Activated CD4-positive, alpha-beta T cell treated with anti-CD3 and anti-CD28 coated beads for 36 hours (primary cell): ENCODE measurements at regions of chr14 and their contacts with region 1.

Region 1: GRCh38 chr14:61837336-61838229 is 75.4 kb downstream of the SNAPC1 start:
- DNase-seq: peak; percentile 87
- ATAC-seq: peak; percentile 95
- H3K4me3 Mint-ChIP-seq: no peak overlapping the region
- H3K27ac Mint-ChIP-seq: no peak overlapping the region
- H3K4me1 Mint-ChIP-seq: peaks cover 4% of the 10 kb centered on the region
- H3K27me3 Mint-ChIP-seq: no peaks in the 10 kb centered on the region

Region 2: DNA sequence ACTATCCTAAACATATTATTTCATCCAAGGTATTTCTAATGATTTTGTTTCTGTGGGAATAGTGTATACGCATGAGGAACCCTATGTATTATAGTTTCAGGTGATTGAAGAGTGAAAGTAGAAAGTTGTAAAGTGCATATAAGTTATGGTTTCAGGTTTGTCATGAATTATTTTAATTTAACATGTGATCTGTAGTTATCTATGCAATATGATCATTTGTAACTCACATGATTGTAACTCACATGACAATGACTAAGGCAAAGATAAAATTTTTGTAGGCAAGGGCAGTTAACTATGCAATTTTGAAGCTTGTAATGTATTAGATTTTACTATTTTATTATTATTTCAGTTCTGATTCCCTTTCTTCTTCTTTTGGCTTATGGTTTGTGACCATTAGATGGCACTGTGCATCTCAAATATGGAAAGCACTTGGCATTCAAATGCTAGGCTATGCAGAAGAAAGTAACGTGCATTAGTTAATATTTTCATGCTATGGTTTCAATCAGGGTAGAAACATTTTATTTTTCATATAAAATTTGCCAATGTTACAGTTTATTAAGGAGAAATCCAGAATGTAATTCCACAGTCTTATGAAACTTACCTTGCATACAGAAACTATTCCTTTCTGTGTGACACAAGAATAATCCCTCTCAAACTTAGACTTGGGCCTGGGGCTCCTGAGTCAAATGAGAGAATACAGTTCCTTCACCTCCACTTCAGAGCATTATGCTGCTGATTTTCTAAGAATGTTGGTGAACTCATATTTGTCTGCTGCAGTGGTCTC is 540.7 kb before region 1 on chr14:
- CTCF ChIA-PET with region 1: interaction called, 7 read pairs
- POLR2A ChIA-PET with region 1: no interaction called
- intact Hi-C with region 1: loop called (anchors 1 kb)
- DNase-seq: no peak
- ATAC-seq: peak; percentile 67
- H3K4me3 Mint-ChIP-seq: no peak overlapping the region
- H3K27ac Mint-ChIP-seq: peak overlapping the region; percentile 29
- H3K4me1 Mint-ChIP-seq: peaks cover 54% of the 10 kb centered on the region
- H3K27me3 Mint-ChIP-seq: no peaks in the 10 kb centered on the region

Region 3: DNA sequence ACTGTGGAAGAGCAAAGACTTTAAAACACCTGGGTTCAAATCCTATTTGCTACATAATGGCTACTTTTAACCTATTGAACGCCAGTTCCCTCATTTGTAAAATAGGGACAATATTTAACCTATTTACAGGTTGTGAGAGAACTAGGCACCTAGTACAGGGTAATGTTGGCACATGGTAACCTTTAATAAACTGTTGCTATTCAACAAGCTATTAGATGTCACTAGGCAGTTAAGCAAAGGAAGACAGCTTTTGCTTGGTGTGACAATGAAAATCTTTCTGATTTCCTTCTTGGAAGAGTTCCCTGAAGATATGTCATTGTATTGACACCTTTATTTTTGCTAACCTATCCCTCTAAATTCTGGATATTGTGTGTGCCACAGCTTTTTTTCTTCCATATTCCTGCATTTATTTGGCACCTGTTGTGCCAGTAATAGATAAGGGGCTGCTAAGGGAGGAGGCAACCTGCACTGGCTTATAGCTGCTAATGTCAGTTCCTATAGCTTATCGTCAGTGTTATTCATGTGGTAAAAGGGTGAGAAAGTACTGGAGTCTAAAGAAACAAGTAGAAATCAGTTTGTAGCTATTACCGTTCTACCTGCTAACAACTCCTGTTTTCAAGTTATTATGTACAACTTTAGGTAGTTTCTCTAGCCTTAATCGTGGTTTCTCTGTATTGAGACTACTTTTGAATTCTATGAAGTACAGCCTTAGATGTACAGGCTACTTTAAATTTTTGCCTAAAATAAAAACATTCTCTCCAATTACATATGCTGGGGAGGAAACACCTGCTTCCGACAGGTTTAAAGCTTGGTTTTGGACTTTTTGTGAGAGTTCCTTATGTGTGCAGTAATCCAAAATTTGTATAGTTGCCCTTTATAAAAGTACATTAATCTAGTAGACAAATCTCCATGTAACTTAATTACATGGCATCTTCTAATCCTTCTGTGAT is 118.0 kb before region 1 on chr14:
- CTCF ChIA-PET with region 1: interaction called, 14 read pairs
- POLR2A ChIA-PET with region 1: no interaction called
- intact Hi-C with region 1: no loop called
- DNase-seq: no peak
- ATAC-seq: peak; percentile 52
- H3K4me3 Mint-ChIP-seq: peak overlapping the region; percentile 41
- H3K27ac Mint-ChIP-seq: peak overlapping the region; percentile 81
- H3K4me1 Mint-ChIP-seq: peaks cover 83% of the 10 kb centered on the region
- H3K27me3 Mint-ChIP-seq: no peaks in the 10 kb centered on the region

Region 4: GRCh38 chr14:61780125-61780524 is 57.5 kb before region 1 on chr14:
- CTCF ChIA-PET with region 1: interaction called, 14 read pairs
- POLR2A ChIA-PET with region 1: no interaction called
- intact Hi-C with region 1: no loop called
- DNase-seq: peak; percentile 20
- ATAC-seq: peak; percentile 95
- H3K4me3 Mint-ChIP-seq: no peak overlapping the region
- H3K27ac Mint-ChIP-seq: peak overlapping the region; percentile 88
- H3K4me1 Mint-ChIP-seq: peaks cover 36% of the 10 kb centered on the region
- H3K27me3 Mint-ChIP-seq: no peaks in the 10 kb centered on the region

Region 5: DNA sequence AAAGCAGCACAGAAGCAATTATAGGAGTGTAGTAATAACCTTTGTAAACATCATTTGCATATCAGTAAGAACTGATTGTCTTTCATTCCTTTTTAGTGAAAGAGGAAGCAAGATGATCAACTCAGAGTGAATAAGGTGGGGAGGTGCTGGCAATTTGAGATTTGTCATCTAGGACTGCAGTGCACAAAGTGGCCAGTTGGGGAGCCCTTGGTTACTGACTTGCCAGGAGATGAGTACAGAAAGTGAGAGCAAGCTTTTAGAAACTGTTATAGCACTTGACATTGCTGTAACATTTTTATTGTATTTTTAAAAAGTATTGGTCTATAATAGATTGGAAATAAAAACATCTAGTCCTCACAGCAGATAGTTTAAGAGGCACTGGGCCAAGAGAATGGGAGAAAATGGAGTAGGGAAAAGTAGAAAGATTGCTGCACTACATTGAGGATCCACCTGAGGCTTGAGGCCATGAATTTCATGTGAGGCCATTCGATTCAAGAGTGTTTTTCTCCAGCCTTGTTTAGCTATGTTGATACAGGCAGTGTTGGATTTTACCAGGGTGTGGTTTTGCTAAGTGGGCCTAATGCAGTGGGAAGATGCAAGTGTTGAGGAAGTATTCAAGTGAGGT is 22.8 kb after region 1 on chr14:
- CTCF ChIA-PET with region 1: interaction called, 13 read pairs
- POLR2A ChIA-PET with region 1: no interaction called
- intact Hi-C with region 1: no loop called
- DNase-seq: peak; percentile 86
- ATAC-seq: peak; percentile 100
- H3K4me3 Mint-ChIP-seq: no peak overlapping the region
- H3K27ac Mint-ChIP-seq: no peak overlapping the region
- H3K4me1 Mint-ChIP-seq: peaks cover 5% of the 10 kb centered on the region
- H3K27me3 Mint-ChIP-seq: peaks cover 14% of the 10 kb centered on the region

Region 6: DNA sequence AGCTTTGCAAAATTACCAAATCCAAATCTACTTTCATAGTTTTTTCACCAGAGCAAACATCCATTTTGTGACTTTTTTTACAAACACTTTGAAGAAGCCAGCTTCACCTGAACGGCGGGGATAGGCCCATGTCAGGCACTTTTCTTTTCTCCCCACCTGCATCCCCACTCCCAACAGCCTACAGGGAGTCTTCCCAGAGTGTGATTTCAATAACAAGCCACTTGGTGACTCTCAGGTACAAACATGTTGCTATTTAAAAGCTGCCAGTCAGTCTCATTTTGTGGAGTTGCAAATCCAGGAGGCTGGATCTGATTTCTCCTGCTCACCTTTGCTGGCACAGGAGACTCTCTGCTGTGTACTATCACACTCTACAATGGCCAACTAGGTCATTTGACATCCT is 922.2 kb after region 1 on chr14:
- CTCF ChIA-PET with region 1: no interaction called
- POLR2A ChIA-PET with region 1: no interaction called
- intact Hi-C with region 1: no loop called
- DNase-seq: no peak
- ATAC-seq: no peak
- H3K4me3 Mint-ChIP-seq: no peak overlapping the region
- H3K27ac Mint-ChIP-seq: no peak overlapping the region
- H3K4me1 Mint-ChIP-seq: no peaks in the 10 kb centered on the region
- H3K27me3 Mint-ChIP-seq: no peaks in the 10 kb centered on the region